ENCODE measurements at regions of chr1 and their contacts with region 1.

Region 1: DNA sequence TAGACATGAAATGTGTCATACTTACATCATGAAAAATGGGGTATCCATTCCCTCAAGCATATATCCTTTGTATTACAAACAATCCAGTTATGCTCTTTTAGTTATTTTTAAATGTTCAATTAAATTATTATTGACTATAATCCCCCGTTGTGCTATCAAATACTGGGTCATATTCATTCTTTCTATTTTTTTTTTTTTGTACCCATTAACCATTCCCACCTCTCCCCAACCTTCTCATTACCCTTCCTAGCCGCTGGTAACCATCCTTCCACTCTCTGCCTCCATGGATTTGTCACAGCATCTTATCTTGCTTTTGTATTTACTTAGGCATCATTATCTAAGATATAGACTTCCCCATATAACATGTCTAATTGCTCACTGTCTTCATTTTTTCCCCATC is 15.8 kb downstream of the ATG4C start:
- DNase-seq: no peak
- H3K4me3 ChIP-seq: no peak overlapping the region
- CTCF ChIP-seq: no peak
- POLR2A ChIP-seq: no peak

Region 2: DNA sequence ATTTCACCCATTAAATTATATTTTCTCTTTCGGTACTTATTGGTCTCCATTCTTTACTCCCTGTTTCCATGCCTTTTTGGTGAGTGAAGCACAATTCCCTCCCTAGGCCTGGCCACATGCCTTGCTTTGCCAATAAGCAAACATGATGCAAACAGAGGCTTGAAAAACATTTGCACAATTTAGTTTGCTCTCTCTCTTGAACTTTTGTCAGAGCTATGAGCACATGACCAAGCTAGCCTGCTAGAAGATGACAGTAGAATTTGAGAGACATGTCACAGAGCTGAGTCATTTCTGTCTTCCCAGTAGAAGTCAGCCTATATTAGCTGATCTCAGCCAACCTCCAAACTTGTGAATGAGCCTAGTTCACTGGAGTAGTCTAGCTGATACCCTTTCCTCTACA is 177.8 kb before region 1 on chr1:
- intact Hi-C with region 1: no loop called
- DNase-seq: peak in 1 of 2 donors; percentile 25
- H3K4me3 ChIP-seq: no peak overlapping the region
- CTCF ChIP-seq: no peak
- POLR2A ChIP-seq: no peak

Region 3: DNA sequence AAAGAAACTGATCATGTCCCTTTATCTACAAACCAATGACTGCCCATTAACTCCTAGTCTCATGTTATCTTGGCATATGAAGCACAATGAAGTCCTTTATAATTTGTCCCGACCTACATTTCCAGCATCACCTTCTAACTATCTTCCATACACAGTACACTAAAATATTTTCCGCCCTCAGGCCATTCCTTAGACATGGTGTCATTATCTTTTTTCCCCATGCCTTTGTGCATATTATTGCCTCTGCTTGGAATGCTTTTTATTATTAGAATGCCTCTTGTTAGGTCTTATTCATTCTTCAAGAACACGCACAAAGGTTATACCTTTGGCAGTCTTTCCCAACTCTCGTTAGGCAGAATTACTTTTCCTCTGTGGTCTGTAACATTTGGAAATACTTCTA is 23.9 kb after region 1 on chr1:
- intact Hi-C with region 1: loop called (anchors 1 kb)
- DNase-seq: no peak
- H3K4me3 ChIP-seq: no peak overlapping the region
- CTCF ChIP-seq: no peak
- POLR2A ChIP-seq: no peak